Left colon (tissue), 2 donors: ENCODE measurements at regions of chr2 and their contacts with region 1.

Region 1: GRCh38 chr2:99180755-99181623 is at the starts of genes MITD1 and MRPL30:
- DNase-seq: peak; percentile 90 to 93
- ATAC-seq: peak; percentile 98
- total RNA-seq, gene MITD1: 18.2 to 19.4 TPM
- total RNA-seq, gene MRPL30: 22.3 to 23.5 TPM

Region 2: GRCh38 chr2:99141110-99142108 is 39.6 kb before region 1 on chr2 and contains the start of gene C2orf15:
- intact Hi-C with region 1: loop called in 1 of 2 experiments (anchors 5 kb)
- DNase-seq: peak; percentile 96 to 98
- ATAC-seq: peak; percentile 91
- total RNA-seq, gene C2orf15: 3.3 to 3.5 TPM

Region 3: GRCh38 chr2:99337113-99338028 is 156.4 kb after region 1 on chr2 and contains the start of gene EIF5B:
- intact Hi-C with region 1: no loop called
- DNase-seq: peak; percentile 97
- ATAC-seq: peak; percentile 86
- total RNA-seq, gene EIF5B: 24.3 to 33.0 TPM

Region 4: DNA sequence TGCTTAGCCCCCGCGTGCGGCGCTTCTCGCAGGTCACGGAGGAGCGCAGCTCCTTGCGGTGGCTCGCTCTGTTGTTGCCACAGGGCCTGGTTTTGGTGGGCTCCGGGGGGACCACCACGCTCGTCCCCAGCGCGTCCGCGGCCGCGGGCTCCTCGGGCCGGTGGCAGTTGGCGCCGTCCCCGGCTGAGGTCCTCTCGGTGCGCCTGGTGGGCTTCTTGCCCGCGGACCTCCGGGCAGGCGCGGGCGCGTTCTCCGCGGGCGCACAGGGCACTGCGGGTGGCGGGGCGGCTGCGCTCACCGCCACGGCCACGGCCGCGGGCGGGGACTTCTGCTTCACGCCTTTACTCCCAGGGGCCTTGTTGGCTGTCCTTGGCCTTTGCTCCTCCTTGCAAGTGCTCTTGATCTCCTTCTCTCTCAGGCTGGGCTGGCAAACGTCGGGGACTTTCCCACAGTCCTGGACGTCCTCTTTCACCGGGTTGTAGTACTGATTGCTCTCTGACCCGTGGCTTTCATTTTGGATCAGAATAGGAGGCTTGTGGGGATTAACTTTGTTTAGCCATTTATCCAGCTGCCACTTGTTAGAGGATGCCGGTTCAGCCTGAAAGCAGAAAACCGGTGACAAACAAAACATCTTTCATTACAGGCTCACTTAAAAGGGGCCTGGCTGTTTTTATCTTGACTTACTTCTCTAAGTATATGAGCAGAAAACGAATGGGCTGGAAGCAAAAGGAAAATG is 412.9 kb after region 1 on chr2:
- intact Hi-C with region 1: no loop called
- DNase-seq: no peak
- ATAC-seq: no peak